ENCODE measurements at regions of chr12 and their contacts with region 1.

Region 1: GRCh38 chr12:75058228-75058627 is 151.4 kb downstream of the KCNC2 start:
- DNase-seq: no peak
- H3K4me3 Mint-ChIP-seq: no peak overlapping the region
- H3K27ac Mint-ChIP-seq: no peak overlapping the region
- H3K4me1 Mint-ChIP-seq: no peaks in the 10 kb centered on the region
- H3K27me3 Mint-ChIP-seq: no peaks in the 10 kb centered on the region
- CTCF ChIP-seq: no peak

Region 2: GRCh38 chr12:74747305-74747704 is 310.9 kb before region 1 on chr12:
- CTCF ChIA-PET with region 1: no interaction called
- intact Hi-C with region 1: loop called (anchors 1 kb)
- DNase-seq: peak; percentile 18
- H3K4me3 Mint-ChIP-seq: no peak overlapping the region
- H3K27ac Mint-ChIP-seq: no peak overlapping the region
- H3K4me1 Mint-ChIP-seq: no peaks in the 10 kb centered on the region
- H3K27me3 Mint-ChIP-seq: no peaks in the 10 kb centered on the region
- CTCF ChIP-seq: no peak

Region 3: DNA sequence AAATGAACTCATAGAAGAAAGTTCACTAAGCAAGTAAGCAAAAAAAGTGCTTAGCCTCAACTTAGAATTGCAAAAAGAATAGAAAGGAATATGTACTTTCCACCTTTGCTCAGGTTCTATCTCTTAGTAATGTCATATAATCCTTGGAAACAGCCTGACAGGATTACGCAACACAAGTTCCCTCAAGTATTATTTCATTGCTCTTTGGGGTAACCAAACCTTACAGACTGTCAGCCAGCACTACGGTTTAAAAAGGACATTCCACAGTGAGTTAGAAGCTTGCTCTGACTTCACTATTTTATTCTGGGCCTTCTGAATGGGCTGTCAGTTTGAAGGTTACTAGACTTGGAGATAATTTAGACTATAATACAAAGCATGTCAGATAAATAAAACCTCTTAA is 256.6 kb before region 1 on chr12:
- CTCF ChIA-PET with region 1: no interaction called
- intact Hi-C with region 1: loop called (anchors 2 kb)
- DNase-seq: no peak
- H3K4me3 Mint-ChIP-seq: no peak overlapping the region
- H3K27ac Mint-ChIP-seq: no peak overlapping the region
- H3K4me1 Mint-ChIP-seq: peaks cover 14% of the 10 kb centered on the region
- H3K27me3 Mint-ChIP-seq: no peaks in the 10 kb centered on the region
- CTCF ChIP-seq: no peak

Region 4: DNA sequence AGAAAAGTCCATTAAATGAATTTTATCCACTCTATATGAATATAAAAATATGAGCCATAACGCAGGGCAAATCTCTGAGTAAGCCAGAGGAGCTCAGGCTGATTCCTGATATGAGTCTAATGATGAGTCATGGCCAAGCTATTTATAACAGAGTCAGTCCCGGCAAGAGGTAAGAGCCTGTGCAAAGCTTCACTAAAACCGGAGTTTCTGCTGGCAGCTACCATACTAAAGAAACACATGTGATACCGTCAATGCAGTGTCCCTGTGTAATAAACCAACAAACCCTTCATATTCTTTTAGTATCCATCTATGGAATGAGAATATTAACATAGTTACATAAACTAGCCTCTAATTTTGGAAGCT is 168.0 kb before region 1 on chr12:
- CTCF ChIA-PET with region 1: no interaction called
- intact Hi-C with region 1: loop called (anchors 2 kb)
- DNase-seq: peak; percentile 52
- H3K4me3 Mint-ChIP-seq: peak overlapping the region; percentile 33
- H3K27ac Mint-ChIP-seq: peak overlapping the region; percentile 68
- H3K4me1 Mint-ChIP-seq: peaks cover 36% of the 10 kb centered on the region
- H3K27me3 Mint-ChIP-seq: no peaks in the 10 kb centered on the region
- CTCF ChIP-seq: no peak